Activated CD4-positive, alpha-beta T cell treated with anti-CD3 and anti-CD28 coated beads, Interleukin-2, amount 10 ng/mL, durations not matched to agents 24 days and 14 days (primary cell): ENCODE measurements at regions of chr21 and their contacts with region 1.

Region 1: DNA sequence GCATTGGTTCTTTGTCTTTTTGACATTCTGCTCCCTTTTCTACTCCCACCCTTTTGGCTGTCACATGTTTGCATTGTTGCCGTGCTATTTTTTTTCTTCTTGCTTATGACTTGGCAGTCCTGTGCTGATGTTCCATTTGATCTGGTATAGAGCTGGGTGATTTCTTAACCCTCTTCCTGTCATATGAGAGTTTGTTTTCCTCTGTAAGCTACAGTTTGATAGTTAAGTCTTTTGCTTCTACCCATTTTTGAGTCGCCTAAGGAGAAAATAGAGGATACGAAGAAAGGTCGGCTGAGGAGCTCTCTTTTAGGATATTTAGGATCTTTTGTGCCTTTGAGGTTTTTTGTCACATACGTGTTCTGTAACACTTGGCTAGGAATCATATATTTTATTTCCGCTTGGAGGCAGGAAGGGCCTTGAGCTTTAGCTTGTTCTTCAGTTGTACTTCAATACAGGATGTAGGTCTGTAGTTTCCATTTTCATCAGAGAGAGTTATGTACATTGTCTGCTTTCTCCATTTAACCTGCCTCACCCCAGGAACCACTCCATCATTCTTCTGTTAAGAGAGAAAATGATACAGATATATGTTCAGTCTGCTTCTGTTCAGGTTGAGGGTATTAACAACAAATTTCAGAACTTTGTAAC is 150.7 kb downstream of the BACH1 start:
- DNase-seq: peak; percentile 73
- H3K4me3 Mint-ChIP-seq: peak overlapping the region; percentile 57
- H3K27ac Mint-ChIP-seq: peak overlapping the region; percentile 94
- H3K4me1 Mint-ChIP-seq: peaks cover 14% of the 10 kb centered on the region
- H3K27me3 Mint-ChIP-seq: no peaks in the 10 kb centered on the region

Region 2: GRCh38 chr21:29287383-29287782 is 162.0 kb before region 1 on chr21:
- intact Hi-C with region 1: no loop called
- DNase-seq: no peak
- H3K4me3 Mint-ChIP-seq: no peak overlapping the region
- H3K27ac Mint-ChIP-seq: no peak overlapping the region
- H3K4me1 Mint-ChIP-seq: peaks cover 1% of the 10 kb centered on the region
- H3K27me3 Mint-ChIP-seq: peaks cover 8% of the 10 kb centered on the region

Region 3: DNA sequence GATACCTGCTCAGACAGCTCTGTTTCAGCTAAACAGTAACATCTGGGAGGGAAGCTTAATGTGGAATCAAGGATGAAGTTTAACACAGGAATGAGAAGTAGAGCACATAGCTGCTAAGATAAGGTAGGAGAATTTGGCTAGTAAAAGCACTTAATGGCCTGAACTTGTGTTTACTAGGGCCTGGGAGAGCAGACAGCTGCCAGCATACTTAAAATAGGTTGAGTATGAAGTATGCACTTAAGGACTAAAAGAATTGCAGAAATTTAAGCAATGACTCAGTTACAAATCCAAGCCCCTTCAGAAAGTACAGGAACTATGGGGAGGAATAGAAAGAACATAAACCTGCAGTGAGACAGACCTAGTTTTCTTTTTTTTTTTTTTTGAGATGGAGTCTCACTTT is 97.7 kb before region 1 on chr21:
- intact Hi-C with region 1: no loop called
- DNase-seq: no peak
- H3K4me3 Mint-ChIP-seq: no peak overlapping the region
- H3K27ac Mint-ChIP-seq: no peak overlapping the region
- H3K4me1 Mint-ChIP-seq: peaks cover 15% of the 10 kb centered on the region
- H3K27me3 Mint-ChIP-seq: no peaks in the 10 kb centered on the region

Region 4: GRCh38 chr21:29436143-29436542 is 13.3 kb before region 1 on chr21:
- intact Hi-C with region 1: loop called (anchors 1 kb)
- DNase-seq: peak; percentile 80
- H3K4me3 Mint-ChIP-seq: peak overlapping the region; percentile 18
- H3K27ac Mint-ChIP-seq: peak overlapping the region; percentile 74
- H3K4me1 Mint-ChIP-seq: peaks cover 23% of the 10 kb centered on the region
- H3K27me3 Mint-ChIP-seq: no peaks in the 10 kb centered on the region